ENCODE measurements at regions of chr11 and their contacts with region 1.

Region 1: DNA sequence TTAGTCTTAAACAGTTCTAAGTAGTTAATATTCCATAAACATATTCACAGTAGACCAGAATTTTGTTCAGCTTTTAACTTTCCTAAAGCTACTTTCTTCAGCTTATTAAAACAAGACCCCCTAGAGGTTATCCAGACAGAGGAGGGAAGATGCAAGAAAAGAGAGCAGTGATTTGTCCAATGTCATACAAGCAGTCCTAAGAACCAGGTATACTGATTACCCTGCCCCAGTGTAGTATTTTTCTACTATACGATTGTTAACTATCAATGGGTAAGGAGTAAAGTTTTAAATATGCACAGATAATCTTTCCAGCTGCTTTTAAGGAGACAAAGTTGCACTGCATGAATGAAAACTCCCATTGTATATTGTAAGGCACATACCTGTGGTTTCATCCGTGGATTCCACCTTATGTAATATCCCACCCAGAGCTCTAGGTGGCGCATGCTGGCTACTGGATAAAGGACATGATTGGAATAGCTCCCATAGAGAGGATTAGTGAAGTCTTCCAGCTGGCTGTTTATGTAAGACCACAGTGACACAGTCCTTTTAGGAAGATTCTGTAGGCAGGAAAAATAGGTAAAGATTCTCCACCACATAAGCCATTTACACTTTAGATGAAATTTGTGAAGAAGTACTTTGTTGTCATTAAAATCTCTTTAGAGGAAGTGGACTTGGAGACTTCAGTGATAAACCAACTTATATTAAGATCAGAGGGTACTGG is 45.6 kb downstream of the CEP57 start:
- DNase-seq: peak in 1 of 2 donors; percentile 60
- ATAC-seq: peak; percentile 79 to 97 (median 94)
- H3K4me3 ChIP-seq: no peak overlapping the region
- H3K27ac ChIP-seq: peak overlapping the region in 4 of 10 donors; percentile 24 to 42 (median 30)
- H3K4me1 ChIP-seq: peaks cover 0 to 8% (median 0%) of the 10 kb centered on the region in 9 donors
- H3K27me3 ChIP-seq: no peaks in the 10 kb centered on the region
- CTCF ChIP-seq: peak; percentile 77 to 93 (median 87)

Region 2: GRCh38 chr11:96045622-96046456 is 209.9 kb after region 1 on chr11:
- intact Hi-C with region 1: loop called in 5 of 10 experiments (anchors 5 to 10 kb)
- DNase-seq: peak; percentile 21 to 23
- ATAC-seq: peak; percentile 61 to 74 (median 66)
- H3K4me3 ChIP-seq: peak overlapping the region in 7 of 10 donors; percentile 14 to 36 (median 34)
- H3K27ac ChIP-seq: peak overlapping the region in 6 of 10 donors; percentile 28 to 71 (median 41)
- H3K4me1 ChIP-seq: peaks cover 0 to 42% (median 15%) of the 10 kb centered on the region in 9 donors
- H3K27me3 ChIP-seq: no peaks in the 10 kb centered on the region
- CTCF ChIP-seq: peak in 4 of 9 donors; percentile 26 to 39 (median 34)

Region 3: DNA sequence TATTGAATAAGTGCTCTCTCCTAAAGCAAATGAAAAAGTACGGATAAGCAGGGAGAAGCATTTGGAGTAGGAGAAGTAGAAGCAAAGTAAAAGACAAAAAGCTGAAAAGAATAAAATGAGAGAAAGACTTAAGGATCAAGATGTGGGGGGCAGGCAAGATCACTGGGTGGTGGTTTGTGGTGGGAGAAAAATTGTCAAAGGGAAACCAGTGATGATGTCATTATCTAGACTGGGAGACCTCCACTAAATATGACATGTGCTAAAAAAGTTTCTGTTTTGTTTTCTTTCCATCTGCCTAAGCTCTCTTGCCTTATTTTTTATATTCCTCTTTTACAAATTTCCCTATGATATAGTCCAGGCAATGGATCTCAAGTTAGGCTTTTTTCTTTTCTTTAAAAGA is 521.9 kb after region 1 on chr11:
- intact Hi-C with region 1: loop called in 1 of 10 experiments (anchors 10 kb)
- DNase-seq: no peak
- ATAC-seq: no peak
- H3K4me3 ChIP-seq: no peak overlapping the region
- H3K27ac ChIP-seq: no peak overlapping the region
- H3K4me1 ChIP-seq: no peaks in the 10 kb centered on the region
- H3K27me3 ChIP-seq: no peaks in the 10 kb centered on the region
- CTCF ChIP-seq: no peak

Region 4: GRCh38 chr11:96389720-96390487 is 554.0 kb after region 1 on chr11 and contains the starts of genes CCDC82 and JRKL:
- intact Hi-C with region 1: loop called in 8 of 10 experiments (anchors 5 to 10 kb)
- DNase-seq: peak; percentile 97
- ATAC-seq: peak; percentile 99 to 100 (median 100)
- H3K4me3 ChIP-seq: peak within 1 kb of the TSS; percentile 62 to 97 (median 88)
- H3K27ac ChIP-seq: peak within 1 kb of the TSS; percentile 44 to 93 (median 88)
- H3K4me1 ChIP-seq: peaks cover 0 to 46% (median 24%) of the 10 kb centered on the region in 9 donors
- H3K27me3 ChIP-seq: no peaks in the 10 kb centered on the region
- CTCF ChIP-seq: no peak
- total RNA-seq, gene CCDC82: 10.9 to 15.3 (median 13.1) TPM
- total RNA-seq, gene JRKL: 4.7 to 7.5 (median 6.1) TPM

Region 5: GRCh38 chr11:96424693-96425092 is 588.8 kb after region 1 on chr11:
- intact Hi-C with region 1: loop called in 4 of 10 experiments (anchors 5 to 10 kb)
- DNase-seq: no peak
- ATAC-seq: no peak
- H3K4me3 ChIP-seq: no peak overlapping the region
- H3K27ac ChIP-seq: no peak overlapping the region
- H3K4me1 ChIP-seq: no peaks in the 10 kb centered on the region
- H3K27me3 ChIP-seq: peaks cover 0 to 72% (median 12%) of the 10 kb centered on the region in 7 donors
- CTCF ChIP-seq: no peak